ENCODE measurements at regions of chr3 and their contacts with region 1.

Region 1: DNA sequence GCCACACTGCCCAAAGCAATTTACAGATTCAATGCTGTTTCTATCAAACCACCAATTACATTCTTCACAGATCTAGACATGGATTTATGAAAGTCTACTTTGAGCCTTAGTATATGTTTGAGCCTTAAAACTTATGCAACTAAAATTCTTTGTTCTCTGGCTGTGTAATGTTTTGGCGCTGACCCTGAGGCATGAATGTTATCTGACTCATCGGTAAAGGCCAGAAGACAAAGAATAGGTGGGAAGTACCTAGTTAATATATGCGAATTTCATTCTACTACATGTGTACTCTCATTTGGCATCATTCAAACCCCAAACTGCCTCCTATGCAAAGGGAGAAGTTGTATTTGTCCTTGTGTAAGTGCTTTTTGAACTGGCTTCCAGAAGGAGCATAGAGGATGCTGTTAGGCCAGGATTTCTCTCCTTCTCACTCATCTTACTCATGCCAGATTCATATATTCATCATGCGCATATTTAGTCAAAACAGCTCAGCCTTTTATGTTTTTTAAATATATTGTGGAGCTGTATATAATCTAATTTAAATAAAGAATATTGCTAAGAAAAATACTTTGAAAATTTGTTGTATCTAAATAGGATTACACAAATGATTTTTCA is 204.2 kb downstream of the NFKBIZ start:
- DNase-seq: no peak
- H3K4me3 Mint-ChIP-seq: no peak overlapping the region
- H3K27ac Mint-ChIP-seq: no peak overlapping the region
- H3K4me1 Mint-ChIP-seq: peaks cover 24% of the 10 kb centered on the region
- H3K27me3 Mint-ChIP-seq: no peaks in the 10 kb centered on the region

Region 2: DNA sequence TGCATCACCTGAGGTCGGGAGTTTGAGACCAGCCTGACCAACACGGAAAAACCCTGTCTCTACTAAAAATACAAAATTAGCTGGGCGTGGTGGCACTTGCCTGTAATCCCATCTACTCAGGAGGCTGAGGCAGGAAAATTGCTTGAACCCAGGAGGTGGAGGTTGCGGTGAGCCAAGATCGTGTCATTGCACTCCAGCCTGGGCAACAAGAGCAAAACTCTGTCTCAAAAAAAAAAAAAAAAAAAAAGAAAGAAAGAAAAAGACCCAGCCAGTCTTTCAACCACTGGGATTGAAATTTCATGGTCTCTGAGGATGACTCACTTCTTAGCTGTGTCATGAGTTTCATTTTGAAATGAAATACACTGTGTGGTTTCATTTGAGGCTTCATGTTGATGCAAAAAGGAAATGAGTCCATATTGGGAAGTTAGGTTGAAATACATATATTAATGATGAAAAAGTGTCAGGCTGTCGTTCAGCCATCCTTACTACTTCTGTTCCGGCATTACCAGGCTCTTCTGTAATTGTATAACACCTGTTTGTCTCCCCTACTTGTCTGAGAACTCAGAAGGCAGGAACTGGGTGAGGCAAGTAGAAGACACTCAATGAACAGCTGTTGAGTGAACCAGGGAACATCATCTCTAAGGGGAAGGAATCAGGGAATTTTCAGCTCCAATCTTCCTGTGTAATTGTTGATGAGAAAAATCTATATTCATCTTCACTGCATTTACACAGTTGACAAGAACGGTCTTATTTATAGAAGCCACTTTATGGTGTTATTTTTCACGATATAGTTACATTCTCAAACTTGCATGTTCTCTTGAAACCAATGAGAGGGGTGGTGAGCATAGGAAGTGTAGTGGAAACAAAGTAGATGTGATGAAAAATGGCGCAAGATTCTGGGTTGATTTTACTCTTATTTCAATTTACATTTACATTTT is 116.8 kb before region 1 on chr3:
- intact Hi-C with region 1: no loop called
- DNase-seq: peak; percentile 18
- H3K4me3 Mint-ChIP-seq: peak overlapping the region; percentile 46
- H3K27ac Mint-ChIP-seq: peak overlapping the region; percentile 71
- H3K4me1 Mint-ChIP-seq: peaks cover 33% of the 10 kb centered on the region
- H3K27me3 Mint-ChIP-seq: peaks cover 16% of the 10 kb centered on the region

Region 3: DNA sequence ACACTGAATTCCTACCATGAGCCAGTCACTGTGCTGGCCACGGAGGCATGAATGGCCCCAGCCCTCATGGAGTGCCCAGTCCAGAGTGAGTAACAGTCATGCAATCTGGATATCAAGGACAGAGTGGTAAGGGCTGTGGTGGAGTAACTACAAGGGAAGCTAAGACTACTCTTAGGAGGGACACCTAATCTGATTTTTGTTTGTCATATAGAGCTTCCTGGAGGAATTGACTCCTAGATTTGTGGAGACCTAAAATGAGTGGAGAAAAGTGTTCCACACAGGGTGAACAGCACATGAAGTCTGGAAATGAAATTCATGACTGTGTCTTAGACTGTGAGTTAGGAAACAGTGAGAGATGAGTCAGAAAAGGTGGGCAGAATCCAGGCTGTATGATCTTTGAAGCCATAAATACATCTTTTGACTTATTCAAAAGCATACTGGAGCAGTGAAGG is 15.8 kb after region 1 on chr3:
- intact Hi-C with region 1: loop called (anchors 2 kb)
- DNase-seq: no peak
- H3K4me3 Mint-ChIP-seq: no peak overlapping the region
- H3K27ac Mint-ChIP-seq: peak overlapping the region; percentile 79
- H3K4me1 Mint-ChIP-seq: peaks cover 19% of the 10 kb centered on the region
- H3K27me3 Mint-ChIP-seq: no peaks in the 10 kb centered on the region

Region 4: DNA sequence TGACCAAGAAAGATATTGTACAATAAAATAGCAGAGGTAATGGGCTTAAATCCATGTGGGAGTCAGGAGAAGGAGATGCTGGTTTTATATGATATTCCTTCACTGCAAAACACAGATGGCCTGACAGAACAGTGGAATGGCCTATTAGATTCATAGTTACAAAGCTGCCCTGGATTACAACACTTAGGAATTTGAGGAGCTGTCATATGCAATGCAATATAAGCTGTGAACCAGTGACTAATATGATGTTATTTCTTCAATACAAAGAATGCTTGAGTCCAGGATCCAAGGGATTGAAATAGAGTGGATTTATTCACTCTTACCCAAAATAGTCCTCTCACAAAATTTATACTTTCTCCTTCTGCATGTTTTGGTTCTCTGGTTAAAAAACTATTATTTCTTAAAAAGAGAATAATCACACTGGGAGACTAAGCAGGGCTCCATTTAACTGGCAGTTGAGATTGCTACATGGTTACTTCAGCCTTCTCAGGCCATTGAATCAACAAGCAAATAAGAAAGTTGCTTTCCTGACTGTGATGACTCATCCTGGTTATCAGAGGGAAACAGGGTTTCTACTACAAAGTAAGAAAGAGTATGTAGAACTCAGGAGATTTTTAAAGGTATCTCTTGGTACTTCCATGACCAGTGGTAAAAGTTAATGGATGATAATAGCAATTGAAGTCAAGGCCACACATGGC is 301.5 kb after region 1 on chr3:
- intact Hi-C with region 1: no loop called
- DNase-seq: no peak
- H3K4me3 Mint-ChIP-seq: no peak overlapping the region
- H3K27ac Mint-ChIP-seq: no peak overlapping the region
- H3K4me1 Mint-ChIP-seq: no peaks in the 10 kb centered on the region
- H3K27me3 Mint-ChIP-seq: no peaks in the 10 kb centered on the region

Region 5: DNA sequence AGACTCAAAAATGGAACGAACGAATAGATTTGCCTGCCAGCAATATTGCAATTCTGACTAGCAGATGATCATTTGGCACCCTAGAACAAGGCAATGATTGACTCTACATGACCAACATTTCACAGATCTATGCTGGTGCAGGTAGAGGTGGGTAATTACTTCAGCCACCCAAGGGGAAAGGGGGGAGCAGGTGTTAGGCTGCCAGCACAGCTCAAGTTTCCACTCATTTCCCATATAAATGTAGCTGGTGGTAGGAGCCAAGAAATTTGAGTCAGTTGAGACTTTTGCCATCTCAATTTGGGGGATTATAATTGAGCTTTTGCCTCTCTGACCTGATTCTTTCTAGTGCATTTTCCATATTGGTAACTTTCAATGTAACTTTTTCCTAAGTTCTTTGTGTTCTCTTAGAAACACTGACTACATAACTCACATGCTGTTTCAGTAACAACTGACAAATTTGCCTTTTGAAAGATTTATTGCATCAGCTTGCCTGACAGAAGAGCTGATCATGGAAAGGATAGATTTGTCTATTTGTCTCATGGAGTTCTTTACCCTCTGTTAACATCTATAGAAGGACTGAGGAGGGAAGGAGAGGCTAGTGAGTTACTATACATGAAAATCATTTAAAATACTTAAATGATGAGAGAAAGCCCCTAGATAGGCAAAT is 1283.8 kb after region 1 on chr3:
- intact Hi-C with region 1: no loop called
- DNase-seq: no peak
- H3K4me3 Mint-ChIP-seq: no peak overlapping the region
- H3K27ac Mint-ChIP-seq: no peak overlapping the region
- H3K4me1 Mint-ChIP-seq: no peaks in the 10 kb centered on the region
- H3K27me3 Mint-ChIP-seq: no peaks in the 10 kb centered on the region

Measured in activated T-helper 2 cell treated with anti-CD3 and anti-CD28 coated beads, Interferon-gamma antibody, Interleukin-2, Interleukin-4, amounts not matched to agents 10 μg/mL and 5 μg/mL and 100 μg/mL, durations not matched to agents 14 hours and 24 hours and 36 hours (primary cell).